H1 (cell line): ENCODE measurements at regions of chr6 and their contacts with region 1.

Region 1: GRCh38 chr6:31068669-31069340 is 43.6 kb downstream of the C6orf15 start:
- DNase-seq: peak; percentile 36 to 90
- H3K4me3 ChIP-seq: no peak overlapping the region
- H3K27ac ChIP-seq: no peak overlapping the region; the same call in 1 of the 2 replicates
- H3K4me1 ChIP-seq: peaks cover 3 to 15% (median 7%) of the 10 kb centered on the region in 4 experiments; a peak in 6 of 7 replicates
- H3K27me3 ChIP-seq: no peaks in the 10 kb centered on the region
- CTCF ChIP-seq: peak; percentile 83 to 98 (median 96)
- EP300 ChIP-seq: no peak
- POLR2A ChIP-seq: no peak
- RAD21 ChIP-seq: peak; percentile 75 to 76

Region 2: DNA sequence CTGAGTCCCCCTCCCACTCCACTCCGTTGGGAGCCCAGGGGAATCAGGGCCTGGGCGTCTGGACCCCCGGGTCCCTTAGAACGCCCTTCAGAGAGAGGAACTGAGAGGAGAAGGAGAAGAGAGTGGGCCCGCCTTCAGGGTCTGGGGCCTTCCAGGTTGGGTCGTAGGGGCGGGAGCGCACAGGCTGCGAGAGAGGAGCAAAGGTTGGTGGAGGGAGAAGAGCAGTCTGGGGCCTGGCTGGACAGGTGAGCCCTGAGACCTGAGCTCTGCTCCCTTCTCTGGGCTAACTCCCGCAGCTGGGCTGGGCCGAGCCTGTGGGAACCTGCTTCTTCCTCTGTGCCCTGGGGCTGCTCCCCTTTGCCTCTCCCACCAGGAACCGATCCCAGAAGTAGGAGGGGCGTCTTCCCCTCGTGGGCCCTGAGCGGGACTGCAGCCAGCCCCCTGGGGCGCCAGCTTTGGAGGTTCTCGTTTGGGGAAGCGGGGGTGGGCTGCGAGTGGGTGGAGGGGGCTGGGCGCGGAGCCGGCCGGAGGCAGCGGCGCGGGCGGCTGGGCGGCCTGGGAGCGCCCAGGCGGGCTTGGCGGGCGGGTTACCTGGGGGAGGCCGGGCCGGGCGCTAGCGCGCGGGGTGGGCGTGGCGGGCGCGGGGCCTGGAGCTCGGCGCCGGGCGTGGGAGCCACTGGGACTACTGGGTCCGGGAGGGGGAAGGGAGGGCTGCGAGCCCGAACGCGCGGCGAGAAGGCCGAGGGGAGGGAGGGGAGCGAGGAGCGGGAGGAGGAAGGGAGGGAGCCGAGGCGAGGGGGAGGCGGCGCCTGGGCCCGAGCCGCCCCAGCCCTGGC is 184.9 kb before region 1 on chr6 and contains the start of gene DDR1:
- CTCF ChIA-PET with region 1: interaction called, 20 read pairs
- POLR2A ChIA-PET with region 1: interaction called, 4 read pairs
- DNase-seq: peak in 1 of 2 experiments; percentile 76
- H3K4me3 ChIP-seq: peak within 1 kb of the TSS; percentile 57 to 86 (median 80)
- H3K27ac ChIP-seq: peak within 1 kb of the TSS; percentile 86
- H3K4me1 ChIP-seq: peaks cover 12 to 52% (median 37%) of the 10 kb centered on the region in 4 experiments
- H3K27me3 ChIP-seq: no peaks in the 10 kb centered on the region
- CTCF ChIP-seq: no peak
- EP300 ChIP-seq: no peak
- POLR2A ChIP-seq: no peak
- RAD21 ChIP-seq: no peak
- total RNA-seq, gene DDR1: 181 and 182 TPM in 2 replicates

Region 3: GRCh38 chr6:30942338-30943060 is 126.3 kb before region 1 on chr6:
- CTCF ChIA-PET with region 1: interaction called, 37 read pairs
- POLR2A ChIA-PET with region 1: interaction called, 3 read pairs
- DNase-seq: peak; percentile 83 to 95
- H3K4me3 ChIP-seq: no peak overlapping the region
- H3K27ac ChIP-seq: no peak overlapping the region
- H3K4me1 ChIP-seq: peaks cover 6 to 14% (median 9%) of the 10 kb centered on the region in 4 experiments
- H3K27me3 ChIP-seq: no peaks in the 10 kb centered on the region; a peak in 1 of 7 replicates
- CTCF ChIP-seq: peak; percentile 48 to 62 (median 61)
- EP300 ChIP-seq: 0 out of 3 replicates have a peak, but pooled peaks of 1 of the 2 experiments have one; percentile 44
- POLR2A ChIP-seq: peak in 1 of 2 experiments; percentile 60; a peak in 2 of 3 replicates
- RAD21 ChIP-seq: peak; percentile 49 to 58

Region 4: DNA sequence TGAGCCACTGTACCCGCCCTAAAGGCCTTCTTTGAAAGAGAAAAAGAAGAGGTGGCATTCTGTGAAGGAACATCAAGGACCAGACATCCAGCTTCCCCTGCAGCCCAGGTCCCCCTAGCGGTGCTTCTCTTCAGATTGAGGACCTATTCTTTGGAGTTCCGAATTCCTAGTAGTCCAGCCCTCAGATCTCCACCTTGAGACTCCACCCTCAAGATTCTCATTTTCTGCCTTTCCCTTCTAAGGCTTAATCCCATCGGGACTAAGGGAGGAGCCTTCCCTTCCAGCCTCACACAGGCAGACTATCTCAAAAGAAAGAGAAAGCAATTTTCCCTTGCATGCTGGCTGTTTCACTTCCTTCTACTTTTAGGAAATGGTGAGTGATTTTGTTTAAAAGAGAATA is 26.0 kb before region 1 on chr6:
- CTCF ChIA-PET with region 1: interaction called, 53 read pairs
- POLR2A ChIA-PET with region 1: interaction called, 5 read pairs
- DNase-seq: peak; percentile 21 to 60
- H3K4me3 ChIP-seq: no peak overlapping the region
- H3K27ac ChIP-seq: no peak overlapping the region
- H3K4me1 ChIP-seq: no peaks in the 10 kb centered on the region
- H3K27me3 ChIP-seq: no peaks in the 10 kb centered on the region; a peak in 1 of 7 replicates
- CTCF ChIP-seq: peak; percentile 58 to 75 (median 74)
- EP300 ChIP-seq: no peak
- POLR2A ChIP-seq: no peak
- RAD21 ChIP-seq: peak; percentile 61 to 72

Region 5: GRCh38 chr6:31087494-31088089 is 18.8 kb after region 1 on chr6:
- CTCF ChIA-PET with region 1: interaction called, 17 read pairs
- POLR2A ChIA-PET with region 1: interaction called, 3 read pairs
- DNase-seq: peak in 1 of 2 experiments; percentile 87
- H3K4me3 ChIP-seq: no peak overlapping the region
- H3K27ac ChIP-seq: no peak overlapping the region
- H3K4me1 ChIP-seq: no peaks in the 10 kb centered on the region; a peak in 1 of 7 replicates
- H3K27me3 ChIP-seq: no peaks in the 10 kb centered on the region
- CTCF ChIP-seq: peak; percentile 47 to 70 (median 67)
- EP300 ChIP-seq: no peak
- POLR2A ChIP-seq: no peak
- RAD21 ChIP-seq: peak; percentile 81 to 83